ENCODE measurements at regions of chr9 and their contacts with region 1.

Region 1: GRCh38 chr9:22079873-22080341 is 70.8 kb upstream of the CDKN2B start:
- DNase-seq: peak; percentile 72
- H3K4me3 Mint-ChIP-seq: peak overlapping the region; percentile 56
- H3K27ac Mint-ChIP-seq: peak overlapping the region; percentile 78
- H3K4me1 Mint-ChIP-seq: peaks cover 54% of the 10 kb centered on the region
- H3K27me3 Mint-ChIP-seq: peaks cover 17% of the 10 kb centered on the region

Region 2: DNA sequence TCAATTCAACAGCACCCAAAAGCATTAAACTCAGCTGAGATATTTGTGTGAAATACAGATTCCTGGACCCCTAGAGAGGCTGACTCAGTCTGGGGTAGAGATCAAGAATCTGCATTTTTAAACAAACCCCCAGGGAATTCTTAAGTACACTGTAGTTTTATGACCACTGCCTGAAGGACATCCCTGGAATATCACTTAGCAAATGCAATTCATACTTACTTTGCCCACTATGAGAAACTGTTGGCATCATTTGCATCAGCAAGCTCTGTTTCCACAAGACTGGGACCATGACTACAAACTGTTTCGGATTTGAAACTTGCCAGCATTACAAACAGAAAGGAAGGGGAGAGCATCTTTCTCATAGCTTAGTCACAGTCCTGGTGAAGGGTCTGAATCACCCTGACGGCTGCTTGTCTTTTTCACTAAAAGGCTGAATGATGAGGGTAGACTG is 1521.3 kb before region 1 on chr9:
- intact Hi-C with region 1: loop called (anchors 10 kb)
- DNase-seq: peak; percentile 18
- H3K4me3 Mint-ChIP-seq: peak overlapping the region; percentile 20
- H3K27ac Mint-ChIP-seq: peak overlapping the region; percentile 47
- H3K4me1 Mint-ChIP-seq: peaks cover 83% of the 10 kb centered on the region
- H3K27me3 Mint-ChIP-seq: no peaks in the 10 kb centered on the region

Region 3: GRCh38 chr9:21802195-21803000 is 277.5 kb before region 1 on chr9 and contains the start of gene MTAP:
- intact Hi-C with region 1: loop called (anchors 1 kb)
- DNase-seq: peak; percentile 61
- H3K4me3 Mint-ChIP-seq: peak within 1 kb of the TSS; percentile 100
- H3K27ac Mint-ChIP-seq: peak within 1 kb of the TSS; percentile 100
- H3K4me1 Mint-ChIP-seq: peaks cover 43% of the 10 kb centered on the region
- H3K27me3 Mint-ChIP-seq: peaks cover 48% of the 10 kb centered on the region
- total RNA-seq, gene MTAP: 55.5 and 62.2 TPM in 2 replicates

Region 4: DNA sequence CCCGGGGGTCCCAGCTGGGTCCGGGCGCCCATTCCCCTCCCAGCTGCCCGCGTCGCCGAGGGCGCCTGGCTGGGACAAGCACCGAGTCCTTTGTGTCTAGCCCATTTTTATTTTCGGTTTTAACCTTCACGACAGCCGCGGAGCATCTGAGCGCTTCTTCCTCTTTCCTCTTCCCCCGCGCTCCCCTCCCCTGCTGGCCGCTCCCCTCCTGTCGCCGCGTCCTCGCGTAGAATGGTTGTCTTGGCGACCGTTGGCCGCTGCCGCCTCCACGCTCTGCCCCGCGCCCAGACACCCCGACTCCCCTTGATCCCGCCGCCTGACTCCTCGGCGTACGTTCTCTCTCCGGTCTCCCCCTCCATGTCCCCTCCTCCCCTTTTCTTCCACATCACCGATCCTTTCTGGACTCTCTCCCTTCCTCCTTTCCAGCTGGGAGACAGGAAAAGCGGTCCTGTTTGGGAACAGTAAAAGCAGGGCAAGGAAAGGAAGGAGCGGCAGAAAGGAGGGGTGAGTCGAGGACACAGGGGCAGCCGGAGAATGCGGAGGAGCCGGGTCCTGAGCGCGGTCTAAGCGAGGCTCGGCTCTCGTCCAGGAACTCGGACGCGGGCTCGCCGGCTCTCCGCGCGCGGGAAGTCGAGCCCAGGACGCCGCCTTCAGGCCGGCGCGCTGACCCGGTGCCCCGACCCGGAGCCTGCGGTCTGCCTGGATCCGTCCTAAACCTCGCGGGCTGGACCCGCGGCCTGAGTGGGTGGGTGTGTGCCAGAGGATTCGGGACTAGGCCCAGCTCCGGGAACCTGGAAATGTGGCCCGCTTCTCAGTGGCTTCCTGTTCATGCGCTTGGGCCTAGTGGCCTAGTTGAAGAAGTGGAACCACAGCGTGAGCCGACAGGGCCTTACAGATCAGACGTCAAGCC is 84.5 kb before region 1 on chr9:
- intact Hi-C with region 1: loop called (anchors 1 kb)
- DNase-seq: peak; percentile 80
- H3K4me3 Mint-ChIP-seq: peak overlapping the region; percentile 94
- H3K27ac Mint-ChIP-seq: peak overlapping the region; percentile 97
- H3K4me1 Mint-ChIP-seq: peaks cover 39% of the 10 kb centered on the region
- H3K27me3 Mint-ChIP-seq: peaks cover 45% of the 10 kb centered on the region

Region 5: DNA sequence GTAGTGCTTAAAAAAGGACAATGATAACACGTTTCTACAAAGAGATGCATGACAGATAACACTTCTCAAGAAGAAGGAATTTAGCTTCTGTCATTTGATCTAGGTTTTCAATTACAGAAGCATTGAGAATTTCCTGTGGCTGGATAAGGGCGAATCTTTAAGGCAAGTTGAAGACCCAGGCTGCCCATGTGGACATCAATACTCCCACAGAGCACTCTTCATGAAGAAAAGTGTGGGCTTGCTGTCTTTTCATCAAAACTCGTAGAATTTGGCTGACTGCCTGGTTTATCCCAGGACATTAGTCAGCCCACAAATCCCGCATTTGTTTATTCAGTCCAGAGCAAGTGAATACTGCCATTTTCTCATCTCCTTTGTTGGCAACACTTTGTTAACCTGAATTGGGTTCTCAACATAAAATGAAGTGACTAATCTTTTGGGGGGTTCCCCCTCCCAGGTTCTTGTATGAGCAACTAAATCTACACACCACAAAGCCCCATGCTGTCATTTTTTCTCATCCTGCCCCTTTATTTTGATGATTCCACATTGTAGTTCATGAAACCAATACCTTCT is 27.4 kb before region 1 on chr9:
- intact Hi-C with region 1: loop called (anchors 1 kb)
- DNase-seq: peak; percentile 40
- H3K4me3 Mint-ChIP-seq: no peak overlapping the region
- H3K27ac Mint-ChIP-seq: peak overlapping the region; percentile 5
- H3K4me1 Mint-ChIP-seq: peaks cover 32% of the 10 kb centered on the region
- H3K27me3 Mint-ChIP-seq: peaks cover 26% of the 10 kb centered on the region

Region 6: GRCh38 chr9:22119537-22120158 is 39.7 kb after region 1 on chr9:
- intact Hi-C with region 1: loop called (anchors 1 kb)
- DNase-seq: no peak
- H3K4me3 Mint-ChIP-seq: no peak overlapping the region
- H3K27ac Mint-ChIP-seq: no peak overlapping the region
- H3K4me1 Mint-ChIP-seq: peaks cover 23% of the 10 kb centered on the region
- H3K27me3 Mint-ChIP-seq: peaks cover 53% of the 10 kb centered on the region

Region 7: DNA sequence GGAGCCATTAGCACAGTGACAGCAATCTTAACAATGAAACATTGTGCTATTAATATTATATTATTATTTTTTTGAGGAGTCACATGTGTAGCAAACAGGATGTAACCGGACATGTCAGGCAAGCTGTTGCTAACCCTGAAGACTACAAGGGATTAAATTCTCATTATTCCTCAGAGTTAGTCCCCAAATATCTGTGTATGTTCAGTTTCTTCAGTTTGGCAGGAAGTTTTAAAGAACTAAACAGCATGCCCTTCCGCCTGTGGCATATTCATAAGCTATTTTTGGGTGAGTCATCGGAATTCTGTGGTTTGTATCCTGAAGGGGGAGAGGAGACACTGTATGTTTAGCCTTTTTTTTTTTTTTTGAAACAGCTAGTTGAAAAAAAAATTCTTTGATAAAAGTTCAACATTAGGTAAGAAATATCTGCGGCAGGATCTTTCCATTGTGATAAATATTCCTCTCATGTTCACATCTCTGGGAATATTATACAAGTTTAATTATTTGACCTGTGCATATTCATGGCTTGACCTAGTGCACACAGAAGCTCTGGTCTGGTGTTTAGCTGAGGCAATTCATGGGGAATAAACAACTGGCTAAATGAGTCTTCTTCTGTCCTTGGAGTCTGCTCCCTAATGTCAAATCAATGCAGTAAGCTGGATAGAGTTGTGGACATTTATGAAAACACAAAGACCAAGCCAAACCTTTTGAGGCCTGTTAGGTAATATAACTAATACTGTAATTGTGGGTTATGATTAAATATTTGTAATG is 131.9 kb after region 1 on chr9:
- intact Hi-C with region 1: loop called (anchors 2 kb)
- DNase-seq: no peak
- H3K4me3 Mint-ChIP-seq: no peak overlapping the region
- H3K27ac Mint-ChIP-seq: no peak overlapping the region
- H3K4me1 Mint-ChIP-seq: peaks cover 38% of the 10 kb centered on the region
- H3K27me3 Mint-ChIP-seq: peaks cover 21% of the 10 kb centered on the region